ENCODE measurements at regions of chr3 and their contacts with region 1.

Region 1: DNA sequence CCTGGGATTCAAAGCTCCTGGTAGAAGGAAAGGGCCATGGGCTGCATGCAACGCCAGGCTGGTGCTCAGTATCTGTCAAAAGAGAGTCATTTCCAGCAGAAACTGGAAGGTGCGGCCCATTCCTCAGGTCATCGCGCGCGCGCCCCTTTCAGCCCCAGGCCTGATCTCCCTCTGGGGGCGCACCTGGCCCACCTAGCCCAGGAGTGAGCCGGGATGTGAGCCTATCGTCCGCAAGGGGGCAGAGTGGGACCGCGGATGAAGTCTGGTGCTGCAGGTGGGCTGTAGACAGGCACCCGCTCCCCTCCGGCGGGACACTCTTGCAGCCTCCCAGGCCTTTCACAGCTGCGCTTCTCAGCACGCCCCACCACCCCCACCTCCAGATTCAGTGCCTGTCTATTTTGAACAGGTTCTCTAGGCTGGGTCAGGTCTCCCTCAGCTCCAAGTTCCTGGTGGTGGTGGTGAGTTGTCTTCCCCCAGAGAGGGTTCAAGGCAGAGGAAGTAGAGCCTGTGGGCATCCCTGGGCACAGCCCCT is 5.8 kb upstream of the RPL29 start:
- DNase-seq: peak; percentile 87
- H3K4me3 Mint-ChIP-seq: no peak overlapping the region
- H3K27ac Mint-ChIP-seq: no peak overlapping the region
- H3K4me1 Mint-ChIP-seq: peaks cover 20% of the 10 kb centered on the region
- H3K27me3 Mint-ChIP-seq: peaks cover 10% of the 10 kb centered on the region

Region 2: GRCh38 chr3:51434746-51435327 is 566.7 kb before region 1 on chr3:
- CTCF ChIA-PET with region 1: no interaction called
- POLR2A ChIA-PET with region 1: no interaction called
- DNase-seq: peak; percentile 52
- H3K4me3 Mint-ChIP-seq: no peak overlapping the region
- H3K27ac Mint-ChIP-seq: peak overlapping the region; percentile 33
- H3K4me1 Mint-ChIP-seq: peaks cover 4% of the 10 kb centered on the region
- H3K27me3 Mint-ChIP-seq: no peaks in the 10 kb centered on the region

Region 3: DNA sequence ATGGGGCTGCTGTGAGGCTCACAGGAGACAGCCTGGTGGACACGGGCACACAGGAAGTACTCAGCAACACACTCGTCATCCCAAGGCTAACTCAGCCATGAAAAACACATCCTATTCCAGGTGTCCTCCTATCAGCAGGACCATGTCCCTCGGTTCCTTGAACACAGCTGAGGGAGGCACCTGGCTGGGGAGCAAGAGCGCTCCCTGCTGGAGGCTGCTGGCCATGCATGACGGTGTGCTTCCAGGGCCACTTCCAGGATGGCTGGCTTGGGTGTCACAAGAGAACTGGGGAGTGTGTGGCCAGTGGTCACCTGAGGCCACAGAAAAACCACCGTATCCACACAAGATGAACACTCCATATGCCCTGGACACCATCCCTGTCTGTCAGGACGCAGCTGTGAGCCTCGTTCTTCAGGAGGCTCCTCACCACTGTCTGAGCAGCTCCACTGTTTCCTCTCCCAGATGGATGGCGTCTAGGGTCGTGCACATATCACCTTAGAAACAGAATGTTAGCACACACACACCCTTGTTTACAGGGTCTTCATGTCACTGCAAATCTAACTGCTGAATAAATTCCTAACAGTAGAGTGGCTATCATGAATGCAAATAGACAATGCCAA is 121.7 kb after region 1 on chr3:
- CTCF ChIA-PET with region 1: interaction called, 54 read pairs
- POLR2A ChIA-PET with region 1: interaction called, 7 read pairs
- DNase-seq: peak; percentile 78
- H3K4me3 Mint-ChIP-seq: no peak overlapping the region
- H3K27ac Mint-ChIP-seq: no peak overlapping the region
- H3K4me1 Mint-ChIP-seq: peaks cover 15% of the 10 kb centered on the region
- H3K27me3 Mint-ChIP-seq: no peaks in the 10 kb centered on the region

Region 4: DNA sequence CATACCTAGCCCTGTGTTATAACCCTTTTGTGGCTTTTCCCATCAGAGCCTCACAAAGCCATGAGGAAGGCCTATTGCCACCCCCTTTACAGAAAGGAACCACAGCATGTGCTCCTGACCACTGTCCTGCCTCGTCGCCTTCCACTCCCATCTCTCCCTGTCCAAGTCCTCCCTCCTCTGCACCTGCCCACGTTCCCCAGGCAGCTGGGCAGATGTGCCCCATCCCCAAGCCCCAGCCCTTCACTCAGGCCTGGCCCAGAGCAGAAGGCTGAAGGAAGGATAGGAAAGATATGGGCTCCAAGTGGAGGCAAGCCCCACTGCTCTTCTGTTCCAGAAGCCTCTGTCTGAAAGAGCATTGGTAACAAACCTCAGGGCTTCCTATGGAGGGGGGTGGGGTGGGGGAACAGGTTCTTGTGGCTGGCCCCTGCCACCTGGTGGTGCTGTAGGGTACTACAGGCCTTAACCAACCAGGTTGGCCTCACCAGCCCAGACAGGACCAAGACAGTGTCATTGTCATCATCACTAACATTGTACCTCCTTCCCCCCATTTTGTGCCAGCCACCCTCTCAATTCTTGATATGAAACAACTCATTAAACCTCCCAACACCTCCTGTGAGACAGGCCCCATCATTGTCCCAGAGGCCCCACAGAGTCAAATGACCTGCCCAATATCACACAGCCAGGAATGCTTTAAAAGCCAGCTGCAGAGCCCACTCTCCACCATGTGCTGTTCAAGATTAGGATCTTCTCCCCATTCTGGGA is 142.7 kb after region 1 on chr3:
- CTCF ChIA-PET with region 1: interaction called, 26 read pairs
- POLR2A ChIA-PET with region 1: interaction called, 4 read pairs
- DNase-seq: peak; percentile 88
- H3K4me3 Mint-ChIP-seq: no peak overlapping the region
- H3K27ac Mint-ChIP-seq: peak overlapping the region; percentile 36
- H3K4me1 Mint-ChIP-seq: peaks cover 12% of the 10 kb centered on the region
- H3K27me3 Mint-ChIP-seq: no peaks in the 10 kb centered on the region

Region 5: DNA sequence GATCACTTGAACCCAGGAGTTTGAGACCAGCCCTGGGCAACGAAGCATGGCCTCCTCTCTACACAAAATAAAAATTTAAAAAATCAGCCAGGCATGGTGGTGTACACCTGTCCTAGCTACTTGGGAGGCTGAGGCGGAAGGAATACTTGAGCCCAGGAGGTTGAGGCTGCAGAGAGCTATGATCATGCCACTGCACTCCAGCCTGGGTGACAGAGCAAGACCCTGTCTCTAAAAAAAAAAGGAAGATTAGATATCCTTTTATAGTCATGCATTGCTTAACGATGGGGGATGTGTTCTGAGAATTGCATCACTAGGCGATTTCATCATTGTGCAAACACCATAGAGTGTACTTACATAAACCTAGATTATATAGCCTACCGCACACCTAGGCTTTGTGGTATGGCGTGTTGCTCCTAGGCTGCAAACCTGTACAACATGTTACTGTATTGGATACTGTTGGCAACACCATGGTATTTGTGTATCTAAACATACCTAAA is 209.1 kb after region 1 on chr3:
- CTCF ChIA-PET with region 1: no interaction called
- POLR2A ChIA-PET with region 1: no interaction called
- DNase-seq: no peak
- H3K4me3 Mint-ChIP-seq: no peak overlapping the region
- H3K27ac Mint-ChIP-seq: no peak overlapping the region
- H3K4me1 Mint-ChIP-seq: peaks cover 27% of the 10 kb centered on the region
- H3K27me3 Mint-ChIP-seq: no peaks in the 10 kb centered on the region

Measured in activated CD4-positive, alpha-beta memory T cell treated with anti-CD3 and anti-CD28 coated beads, Interleukin-2, amount 10 ng/mL, durations not matched to agents 7 days and 5 days (primary cell).